Activated CD8-positive, alpha-beta memory T cell treated with anti-CD3 and anti-CD28 coated beads, Interleukin-2, amount 10 ng/mL, durations not matched to agents 7 days and 5 days (primary cell): ENCODE measurements at regions of chr5 and their contacts with region 1.

Region 1: DNA sequence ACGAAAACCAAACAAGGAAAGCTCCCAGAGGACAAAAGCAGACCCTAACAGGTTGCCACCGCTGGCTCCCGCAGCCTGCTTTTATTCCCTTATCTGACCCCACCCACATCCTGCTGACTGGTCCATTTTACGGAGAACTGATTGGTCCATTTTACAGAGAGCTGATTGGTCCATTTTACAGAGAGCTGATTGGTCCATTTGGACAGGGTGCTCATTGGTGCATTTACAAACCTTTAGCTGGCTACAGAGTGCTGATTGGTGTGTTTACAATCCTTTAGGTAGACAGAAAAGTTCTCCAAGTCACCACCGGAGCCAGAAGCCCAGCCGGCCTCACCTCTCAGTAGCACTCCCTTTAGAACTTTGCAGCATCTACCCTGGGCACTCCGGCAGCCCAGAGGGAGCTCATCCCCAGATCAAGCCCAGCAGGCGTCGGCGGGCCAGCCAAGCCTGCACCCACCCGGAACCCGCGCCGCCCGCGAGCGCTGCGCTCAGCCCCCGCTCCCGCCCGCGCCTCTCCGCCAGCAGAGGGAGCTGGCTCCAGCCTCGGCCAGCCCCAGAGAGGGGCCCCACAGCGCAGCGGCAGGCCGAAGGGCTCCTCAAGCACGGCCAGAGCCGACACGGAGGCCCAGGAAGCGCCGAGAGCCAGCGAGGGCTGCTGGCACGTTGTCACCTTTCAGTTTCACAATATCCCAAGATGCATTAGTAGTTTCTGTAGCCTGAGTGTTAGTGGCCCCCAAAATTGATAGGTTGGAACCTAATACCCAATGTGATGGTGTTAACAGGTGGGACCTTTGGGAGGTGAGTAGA is 35.3 kb upstream of the CLPTM1L start:
- DNase-seq: peak; percentile 69
- ATAC-seq: peak; percentile 95
- H3K4me3 Mint-ChIP-seq: peak overlapping the region; percentile 31
- H3K27ac Mint-ChIP-seq: peak overlapping the region; percentile 65
- H3K4me1 Mint-ChIP-seq: peaks cover 15% of the 10 kb centered on the region
- H3K27me3 Mint-ChIP-seq: no peaks in the 10 kb centered on the region

Region 2: DNA sequence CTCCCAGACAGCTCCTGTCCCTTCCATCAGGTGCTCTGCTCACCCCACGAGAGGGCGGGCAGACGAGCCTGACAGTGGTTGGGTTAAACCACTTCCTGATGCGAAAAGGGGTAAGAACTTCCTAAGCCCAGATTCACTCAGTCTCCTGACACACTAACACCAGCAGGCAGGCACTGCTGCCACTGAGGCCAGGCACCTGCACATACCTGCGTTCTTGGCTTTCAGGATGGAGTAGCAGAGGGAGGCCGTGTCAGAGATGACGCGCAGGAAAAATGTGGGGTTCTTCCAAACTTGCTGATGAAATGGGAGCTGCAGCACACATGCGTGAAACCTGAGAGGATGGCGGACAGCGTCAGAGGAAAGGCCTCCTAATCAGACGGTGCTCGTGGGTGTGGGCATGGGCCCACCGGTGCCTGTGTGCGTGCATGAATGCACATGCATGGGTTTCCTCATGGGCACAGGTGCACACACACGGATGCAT is 125.1 kb before region 1 on chr5:
- CTCF ChIA-PET with region 1: no interaction called
- DNase-seq: peak; percentile 74
- ATAC-seq: peak; percentile 87
- H3K4me3 Mint-ChIP-seq: no peak overlapping the region
- H3K27ac Mint-ChIP-seq: no peak overlapping the region
- H3K4me1 Mint-ChIP-seq: peaks cover 16% of the 10 kb centered on the region
- H3K27me3 Mint-ChIP-seq: peaks cover 2% of the 10 kb centered on the region

Region 3: DNA sequence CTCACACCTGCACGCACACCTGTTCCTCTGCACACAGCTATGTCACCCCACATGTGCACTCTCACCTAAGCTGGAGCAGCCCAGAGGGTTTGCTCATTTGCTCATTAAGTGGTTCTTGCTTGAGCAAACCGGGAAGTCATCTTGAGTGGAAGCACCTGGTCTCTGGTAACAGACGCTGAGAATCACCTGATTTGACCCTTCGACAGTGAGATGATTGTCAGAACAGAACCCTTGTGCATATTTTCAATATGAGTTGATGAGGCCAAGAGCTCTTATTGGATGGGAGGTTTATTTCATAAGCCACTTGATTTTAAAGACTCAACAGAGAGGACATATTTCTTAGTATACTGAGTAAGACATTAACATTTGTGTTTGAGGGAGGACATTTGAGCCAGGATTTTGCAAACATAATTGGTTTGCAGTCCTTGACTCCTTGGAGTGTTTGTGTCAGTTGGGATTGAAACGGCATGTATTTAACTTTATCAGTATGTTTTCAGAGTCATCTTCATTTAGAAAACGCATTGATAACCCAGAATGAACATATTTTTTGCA is 165.7 kb after region 1 on chr5:
- CTCF ChIA-PET with region 1: no interaction called
- DNase-seq: peak; percentile 38
- ATAC-seq: no peak
- H3K4me3 Mint-ChIP-seq: no peak overlapping the region
- H3K27ac Mint-ChIP-seq: no peak overlapping the region
- H3K4me1 Mint-ChIP-seq: peaks cover 3% of the 10 kb centered on the region
- H3K27me3 Mint-ChIP-seq: no peaks in the 10 kb centered on the region

Region 4: DNA sequence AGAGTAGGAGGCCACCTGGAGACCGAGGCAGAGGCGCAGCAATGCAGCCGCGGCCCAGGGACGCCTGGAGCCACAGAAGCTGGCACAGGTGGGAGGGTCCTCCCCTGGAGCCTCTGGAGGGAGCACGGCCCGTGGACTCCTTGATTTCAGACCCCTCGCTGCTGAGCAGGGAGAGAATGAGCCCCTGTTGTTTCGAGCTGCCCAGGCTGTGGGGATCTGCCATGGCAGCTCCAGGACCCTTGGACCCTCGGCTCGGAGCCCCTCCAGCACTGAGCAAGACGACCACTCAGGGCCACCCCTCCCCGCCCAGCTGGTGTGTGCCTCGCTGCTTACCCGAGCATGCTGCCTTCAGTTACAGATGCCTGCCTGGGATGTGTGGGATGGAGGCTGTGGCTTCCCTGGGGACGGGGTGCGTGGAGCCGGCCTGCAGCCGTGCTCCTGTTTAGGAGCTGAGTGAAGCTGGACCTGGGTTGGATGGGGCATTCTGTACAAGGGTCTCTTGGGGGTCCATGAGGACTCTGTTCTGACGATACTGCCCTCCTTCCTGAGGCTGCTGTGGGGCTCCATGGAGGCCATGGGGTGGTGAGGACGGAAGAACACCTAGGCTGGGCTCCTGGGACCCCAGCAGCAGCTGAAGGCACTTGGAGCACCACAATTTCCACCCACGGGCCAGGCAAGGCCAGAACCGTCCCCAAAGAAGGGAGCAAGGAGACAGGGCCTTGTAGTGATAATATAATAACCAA is 258.6 kb after region 1 on chr5:
- CTCF ChIA-PET with region 1: interaction called, 27 read pairs
- DNase-seq: no peak
- ATAC-seq: no peak
- H3K4me3 Mint-ChIP-seq: no peak overlapping the region
- H3K27ac Mint-ChIP-seq: no peak overlapping the region
- H3K4me1 Mint-ChIP-seq: peaks cover 15% of the 10 kb centered on the region
- H3K27me3 Mint-ChIP-seq: peaks cover 20% of the 10 kb centered on the region